ENCODE measurements at regions of chr12 and their contacts with region 1.

Region 1: DNA sequence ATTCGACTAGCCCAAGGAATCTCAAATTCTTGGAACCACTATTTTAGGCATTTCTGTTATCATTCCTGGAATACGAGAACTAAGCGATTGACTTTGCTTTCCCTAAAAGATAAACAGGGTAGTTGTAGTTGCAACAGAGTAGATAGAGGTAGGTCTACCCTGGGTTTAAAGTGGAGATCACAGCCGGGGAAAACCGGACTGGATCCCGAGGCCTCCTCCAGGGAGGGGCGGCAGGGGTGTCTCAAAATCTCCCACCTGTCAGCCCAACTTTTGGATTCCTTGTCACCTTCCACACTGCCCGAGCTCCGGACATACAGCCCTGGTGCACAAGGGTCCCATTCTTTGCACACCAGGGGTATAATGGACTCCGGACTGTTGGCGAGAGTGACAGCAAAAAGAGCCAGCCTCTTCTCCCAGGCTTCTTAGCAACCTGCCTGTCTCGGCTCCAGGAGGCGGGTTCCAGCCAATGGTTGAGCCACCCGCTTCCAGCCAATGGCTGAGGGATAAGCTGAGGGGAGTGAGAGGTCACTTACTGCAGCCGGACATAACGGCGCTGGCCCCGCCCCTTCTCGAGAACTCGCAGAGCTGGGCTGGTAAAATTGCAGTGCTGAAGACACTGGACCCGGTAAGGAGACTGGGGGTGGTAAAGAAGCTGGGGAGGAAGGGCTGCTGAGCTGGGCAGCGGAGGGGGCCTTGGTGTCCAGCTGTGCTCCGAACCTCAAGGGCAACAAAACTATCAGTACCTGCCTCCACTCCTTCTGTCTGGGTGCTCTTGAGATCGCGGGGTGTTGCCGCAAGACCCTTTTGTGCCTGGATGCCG is at the start of gene SUOX:
- DNase-seq: peak; percentile 90 to 99 (median 98)
- H3K4me3 ChIP-seq: peak within 1 kb of the TSS; percentile 57 to 96 (median 79)
- H3K27ac ChIP-seq: peak within 1 kb of the TSS; percentile 25 to 96 (median 89)
- H3K27me3 ChIP-seq: no peaks in the 10 kb centered on the region
- CTCF ChIP-seq: peak in 24 of 56 donors; percentile 15 to 52 (median 30)
- total RNA-seq, gene SUOX: 19.5 to 39.8 (median 28.4) TPM

Region 2: GRCh38 chr12:56007564-56008559 is 10.9 kb after region 1 on chr12:
- intact Hi-C with region 1: loop called in 1 of 2 experiments (anchors 1 kb)
- DNase-seq: peak in 4 of 10 donors; percentile 22 to 61 (median 51)
- H3K4me3 ChIP-seq: peak overlapping the region; percentile 64 to 99 (median 87)
- H3K27ac ChIP-seq: peak overlapping the region; percentile 58 to 98 (median 94)
- H3K27me3 ChIP-seq: no peaks in the 10 kb centered on the region
- CTCF ChIP-seq: peak in 10 of 56 donors; percentile 1 to 29 (median 8)

Region 3: GRCh38 chr12:56078990-56079664 is 82.2 kb after region 1 on chr12:
- intact Hi-C with region 1: loop called in 1 of 2 experiments (anchors 10 kb)
- DNase-seq: peak; percentile 31 to 90 (median 84)
- H3K4me3 ChIP-seq: peak overlapping the region; percentile 33 to 94 (median 73)
- H3K27ac ChIP-seq: peak overlapping the region in 58 of 59 donors; percentile 50 to 99 (median 95)
- H3K27me3 ChIP-seq: peaks cover 0 to 26% (median 0%) of the 10 kb centered on the region in 45 donors
- CTCF ChIP-seq: peak; percentile 25 to 83 (median 65)

Measured in dorsolateral prefrontal cortex (tissue), 120 donors.